Adrenal gland (tissue), 19 donors: ENCODE measurements at regions of chr3 and their contacts with region 1.

Region 1: GRCh38 chr3:1082108-1082507 is 10.7 kb upstream of the CNTN6 start:
- DNase-seq: peak; percentile 52 to 78 (median 67)
- H3K4me3 ChIP-seq: no peak overlapping the region
- H3K27ac ChIP-seq: no peak overlapping the region
- H3K4me1 ChIP-seq: peaks cover 0 to 1% of the 10 kb centered on the region in 2 donors
- H3K27me3 ChIP-seq: no peaks in the 10 kb centered on the region
- CTCF ChIP-seq: peak; percentile 69 to 79 (median 76)
- POLR2A ChIP-seq: no peak

Region 2: GRCh38 chr3:976021-976420 is 106.1 kb before region 1 on chr3:
- intact Hi-C with region 1: no loop called
- DNase-seq: no peak
- H3K4me3 ChIP-seq: no peak overlapping the region
- H3K27ac ChIP-seq: no peak overlapping the region
- H3K4me1 ChIP-seq: no peaks in the 10 kb centered on the region
- H3K27me3 ChIP-seq: no peaks in the 10 kb centered on the region
- CTCF ChIP-seq: no peak
- POLR2A ChIP-seq: no peak

Region 3: DNA sequence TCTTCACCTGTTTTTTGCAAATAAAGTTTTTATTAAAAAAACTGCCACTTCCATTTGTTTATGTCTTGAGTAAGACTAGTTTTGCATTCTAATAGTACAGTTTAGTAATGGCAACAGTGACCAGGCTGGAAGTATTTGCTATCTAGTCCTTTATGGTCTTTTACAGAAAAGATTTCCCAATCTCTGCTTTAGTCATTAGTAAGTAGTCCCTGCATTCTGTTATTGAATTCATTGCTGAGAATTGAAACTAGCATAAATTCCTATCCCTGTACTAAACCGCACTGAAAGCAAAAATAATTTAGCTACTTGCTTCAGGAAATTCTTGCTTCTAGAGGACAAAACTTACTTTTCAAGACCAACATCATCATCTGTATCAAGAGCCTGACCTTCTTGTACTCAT is 57.0 kb after region 1 on chr3:
- intact Hi-C with region 1: no loop called
- DNase-seq: no peak
- H3K4me3 ChIP-seq: no peak overlapping the region
- H3K27ac ChIP-seq: no peak overlapping the region
- H3K4me1 ChIP-seq: no peaks in the 10 kb centered on the region
- H3K27me3 ChIP-seq: no peaks in the 10 kb centered on the region
- CTCF ChIP-seq: no peak
- POLR2A ChIP-seq: no peak

Region 4: GRCh38 chr3:1172644-1173043 is 90.5 kb after region 1 on chr3:
- intact Hi-C with region 1: no loop called
- DNase-seq: peak in 6 of 7 donors; percentile 21 to 62 (median 36)
- H3K4me3 ChIP-seq: no peak overlapping the region
- H3K27ac ChIP-seq: peak overlapping the region in 4 of 5 donors; percentile 18 to 58 (median 30)
- H3K4me1 ChIP-seq: peaks cover 0 to 6% of the 10 kb centered on the region in 2 donors
- H3K27me3 ChIP-seq: no peaks in the 10 kb centered on the region
- CTCF ChIP-seq: no peak
- POLR2A ChIP-seq: no peak

Region 5: DNA sequence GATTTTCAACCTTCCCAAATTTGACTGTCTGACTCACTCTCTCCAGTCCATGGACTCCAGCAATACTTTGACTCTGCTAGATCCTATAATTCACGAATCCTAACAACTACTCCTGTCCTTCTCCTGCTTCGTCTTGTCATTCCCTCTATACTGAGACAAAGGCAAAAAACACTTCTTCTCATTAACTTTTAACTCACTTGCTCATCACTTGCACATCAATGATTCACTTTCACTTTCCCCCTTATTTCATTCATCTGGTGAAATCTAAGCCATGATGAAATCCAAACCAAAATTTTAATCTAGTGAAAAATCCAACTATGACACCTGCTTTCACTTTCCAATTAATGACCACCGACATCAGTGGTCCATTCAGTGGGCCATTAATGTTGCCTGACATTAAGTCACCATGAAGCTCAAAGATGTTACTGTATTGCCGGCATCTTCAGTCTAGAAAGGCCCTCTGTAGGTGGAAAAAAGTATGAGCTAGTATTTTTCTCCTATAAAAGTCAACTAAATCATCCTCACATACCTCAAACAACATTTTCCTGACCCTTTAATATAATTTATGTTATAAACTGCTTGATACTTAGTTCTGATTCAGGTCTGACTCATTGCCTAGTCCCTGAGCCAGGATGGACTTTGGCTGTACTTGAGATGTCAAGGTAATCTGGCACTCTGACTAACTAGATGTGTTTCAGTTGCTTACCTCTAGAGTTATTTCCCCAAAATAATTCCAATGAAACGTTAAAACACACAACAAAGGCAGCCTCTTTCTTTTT is 169.4 kb after region 1 on chr3:
- intact Hi-C with region 1: loop called in 1 of 2 experiments (anchors 10 kb)
- DNase-seq: peak; percentile 26 to 72 (median 56)
- H3K4me3 ChIP-seq: peak overlapping the region in 1 of 4 donors; percentile 13
- H3K27ac ChIP-seq: peak overlapping the region in 4 of 5 donors; percentile 17 to 71 (median 44)
- H3K4me1 ChIP-seq: no peaks in the 10 kb centered on the region
- H3K27me3 ChIP-seq: no peaks in the 10 kb centered on the region
- CTCF ChIP-seq: peak; percentile 5 to 52 (median 36)
- POLR2A ChIP-seq: no peak

Region 6: DNA sequence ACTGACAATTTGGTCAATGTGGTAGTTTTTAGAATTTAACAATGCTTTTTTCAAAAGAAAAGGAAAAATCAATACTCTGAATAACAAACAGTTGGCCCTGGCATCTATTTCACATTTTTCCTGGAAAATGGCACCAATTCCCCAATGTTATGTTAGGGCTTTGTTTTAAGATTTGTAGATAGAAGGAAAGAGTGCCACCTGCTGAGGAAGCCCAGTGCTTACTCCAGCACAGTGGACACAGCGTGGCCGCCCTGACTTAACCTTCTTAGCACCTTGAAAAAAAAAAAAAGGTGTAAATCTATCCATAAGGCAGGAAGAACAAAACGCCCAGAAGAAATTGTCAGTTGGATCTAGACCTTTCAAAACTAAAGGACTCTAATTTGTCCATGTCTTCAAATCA is 905.9 kb after region 1 on chr3:
- intact Hi-C with region 1: loop called in 1 of 2 experiments (anchors 10 kb)
- DNase-seq: peak in 5 of 7 donors; percentile 19 to 53 (median 36)
- H3K4me3 ChIP-seq: no peak overlapping the region
- H3K27ac ChIP-seq: no peak overlapping the region
- H3K4me1 ChIP-seq: no peaks in the 10 kb centered on the region
- H3K27me3 ChIP-seq: no peaks in the 10 kb centered on the region
- CTCF ChIP-seq: peak in 5 of 6 experiments; percentile 20 to 49 (median 40)
- POLR2A ChIP-seq: no peak